Left lung (tissue), 14 donors: ENCODE measurements at regions of chr22 and their contacts with region 1.

Region 1: DNA sequence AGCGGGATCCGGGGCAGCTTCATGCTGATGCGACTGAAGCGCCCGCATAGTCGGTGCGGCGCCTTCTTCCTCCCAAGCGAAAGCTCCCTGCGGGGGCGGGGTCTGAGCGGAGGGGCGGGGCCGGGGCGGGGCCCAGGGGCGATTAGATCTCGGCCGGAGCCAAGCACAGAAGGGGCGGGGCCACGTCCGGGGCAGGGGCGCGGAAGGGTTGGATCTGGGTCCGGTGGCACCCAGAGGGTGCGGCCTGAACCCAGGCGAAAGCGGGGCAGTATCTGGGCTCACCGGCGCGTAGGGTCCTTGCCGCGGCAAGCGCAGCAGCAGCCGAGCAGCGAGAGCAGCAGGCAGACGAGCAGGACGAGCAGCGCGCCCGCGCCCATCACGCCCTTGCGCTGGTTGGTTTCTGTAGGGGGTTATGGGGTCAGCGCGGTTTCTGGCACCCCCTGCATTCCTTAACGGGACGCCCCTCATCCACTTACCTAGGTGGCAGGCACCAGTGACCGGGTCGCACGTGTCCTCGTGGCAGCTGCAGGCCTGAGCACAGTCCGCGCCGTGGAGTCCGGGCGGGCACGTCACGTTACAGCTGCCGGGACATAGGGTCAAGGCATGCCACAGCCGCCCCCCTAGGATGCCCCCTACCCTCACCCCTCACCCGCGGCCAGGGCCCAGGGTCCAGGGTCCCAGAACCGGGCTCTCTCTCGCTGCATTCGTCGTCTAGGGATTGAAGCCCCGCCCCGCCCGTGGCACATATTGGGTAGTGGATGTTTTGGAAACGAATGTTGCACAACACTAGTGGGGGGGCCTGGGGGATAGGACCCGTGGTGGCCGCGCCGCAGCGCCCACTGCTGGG is 8.1 kb downstream of the SCARF2 start:
- DNase-seq: peak in 2 of 4 donors; percentile 75 to 96
- ATAC-seq: peak; percentile 72
- H3K4me3 ChIP-seq: peak overlapping the region; percentile 26 to 54
- H3K27ac ChIP-seq: no peak overlapping the region
- H3K4me1 ChIP-seq: peaks cover 10 to 47% of the 10 kb centered on the region in 2 donors
- H3K27me3 ChIP-seq: peaks cover 9 to 98% of the 10 kb centered on the region in 2 donors
- CTCF ChIP-seq: no peak

Region 2: GRCh38 chr22:20495861-20496681 is 66.6 kb after region 1 on chr22:
- intact Hi-C with region 1: loop called in 1 of 2 experiments (anchors 10 kb)
- DNase-seq: peak; percentile 89 to 99 (median 94)
- ATAC-seq: peak; percentile 97
- H3K4me3 ChIP-seq: peak overlapping the region; percentile 72 to 73
- H3K27ac ChIP-seq: peak overlapping the region; percentile 93 to 94
- H3K4me1 ChIP-seq: peaks cover 11 to 25% of the 10 kb centered on the region in 2 donors
- H3K27me3 ChIP-seq: no peaks in the 10 kb centered on the region
- CTCF ChIP-seq: peak; percentile 76 to 82

Region 3: DNA sequence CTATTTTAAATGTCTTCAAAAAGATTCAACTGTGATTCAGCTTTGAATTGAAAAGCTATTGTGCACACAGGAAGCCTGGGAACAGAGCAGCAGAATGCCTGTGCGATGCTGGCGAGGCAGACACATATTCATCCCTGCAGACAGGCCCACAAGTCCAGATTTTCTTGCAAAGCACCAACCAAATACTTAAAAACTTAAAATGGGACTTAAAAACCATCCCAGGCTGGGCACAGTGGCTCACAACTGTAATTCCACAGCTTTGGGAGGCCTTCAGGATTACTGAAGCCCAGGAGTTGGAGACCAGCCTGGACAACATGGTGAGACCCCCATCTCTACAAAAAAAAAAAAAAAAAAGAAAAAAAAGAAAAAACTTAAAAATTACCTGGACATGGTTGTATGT is 221.8 kb after region 1 on chr22:
- intact Hi-C with region 1: no loop called
- DNase-seq: no peak
- ATAC-seq: no peak
- H3K4me3 ChIP-seq: no peak overlapping the region
- H3K27ac ChIP-seq: no peak overlapping the region
- H3K4me1 ChIP-seq: no peaks in the 10 kb centered on the region
- H3K27me3 ChIP-seq: no peaks in the 10 kb centered on the region
- CTCF ChIP-seq: no peak